Sciatic nerve (tissue), 2 donors: ENCODE measurements at regions of chr1 and their contacts with region 1.

Region 1: GRCh38 chr1:81407000-81407875 is 393.5 kb upstream of the ADGRL2 start:
- DNase-seq: no peak
- ATAC-seq: no peak

Region 2: DNA sequence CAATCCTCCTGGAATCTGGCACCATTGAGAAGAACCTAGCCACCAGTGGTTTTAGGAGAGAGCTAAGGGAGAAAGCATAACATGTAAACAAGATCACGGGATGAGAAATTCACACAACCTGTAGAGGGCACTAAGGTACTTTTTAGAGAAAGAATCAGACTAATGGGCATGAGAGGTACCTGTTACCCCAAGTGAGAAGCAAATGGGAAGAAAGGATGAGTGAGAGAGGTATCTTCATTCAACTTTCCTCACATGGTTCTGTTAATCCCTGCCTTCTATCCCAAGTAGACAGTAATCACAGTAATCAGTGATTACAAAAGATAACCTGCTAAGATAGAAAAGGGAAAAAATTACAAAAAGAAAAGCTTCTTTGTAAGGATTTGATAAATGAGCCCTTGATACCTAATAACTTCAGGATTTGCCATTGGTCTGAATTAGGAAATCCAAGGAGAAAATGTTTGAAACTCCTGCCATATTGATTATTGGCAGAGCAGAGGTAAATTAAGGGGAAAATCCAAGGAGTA is 142.4 kb after region 1 on chr1:
- intact Hi-C with region 1: loop called (anchors 5 kb)
- DNase-seq: no peak
- ATAC-seq: peak; percentile 50

Region 3: DNA sequence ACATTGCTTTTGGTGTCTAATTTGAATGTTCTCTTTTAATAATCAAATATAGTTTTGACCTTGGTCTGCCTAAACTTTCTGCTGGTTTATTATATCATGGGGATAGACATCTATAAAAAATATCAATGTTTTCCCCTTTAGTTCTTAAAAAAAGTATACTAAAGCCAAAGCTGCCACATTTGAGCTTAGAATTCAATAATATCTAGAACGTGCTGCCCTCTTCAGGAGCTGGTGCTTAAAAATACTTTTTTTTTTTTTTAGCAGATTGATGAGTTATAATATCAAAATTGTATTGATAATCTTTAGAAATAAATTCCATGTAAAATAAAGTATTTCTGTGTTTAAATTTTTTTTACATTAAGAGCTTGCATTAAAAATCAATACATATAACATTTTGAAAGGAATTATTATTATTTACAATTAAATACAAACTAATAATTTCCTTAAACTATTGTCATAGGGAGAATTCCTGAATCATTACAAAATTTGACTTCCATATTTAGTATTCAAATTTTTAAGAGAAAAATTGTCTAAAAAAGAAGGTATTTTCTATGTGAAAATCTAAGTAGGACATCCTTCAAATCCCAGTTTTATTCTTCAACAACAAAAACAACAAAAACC is 353.3 kb after region 1 on chr1:
- intact Hi-C with region 1: no loop called
- DNase-seq: no peak
- ATAC-seq: no peak